Upper lobe of right lung (tissue), 1 donor: ENCODE measurements at regions of chr2 and their contacts with region 1.

Region 1: DNA sequence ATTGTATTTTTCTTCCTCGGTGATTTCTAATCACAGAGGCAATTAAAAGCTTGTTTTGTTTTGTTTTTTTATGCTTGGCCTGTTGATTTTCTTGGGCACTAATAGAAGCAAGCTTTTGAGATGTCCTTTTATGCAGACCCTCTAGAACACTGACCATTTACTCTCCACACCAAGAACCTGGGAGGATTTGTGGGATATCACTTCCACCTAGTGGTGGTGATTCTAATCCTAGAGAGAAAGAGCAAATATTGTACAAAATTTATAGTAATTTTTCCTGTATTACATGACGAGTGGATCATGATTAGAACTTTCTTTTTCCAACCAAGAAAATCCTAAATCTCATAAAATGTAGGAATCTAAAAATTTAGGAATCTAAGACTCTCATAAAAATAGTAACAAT is 23.4 kb downstream of the NEMP2 start:
- DNase-seq: no peak
- ATAC-seq: no peak
- H3K4me3 ChIP-seq: no peak overlapping the region
- H3K27ac ChIP-seq: no peak overlapping the region
- H3K4me1 ChIP-seq: no peaks in the 10 kb centered on the region
- H3K27me3 ChIP-seq: no peaks in the 10 kb centered on the region
- CTCF ChIP-seq: peak; percentile 48

Region 2: DNA sequence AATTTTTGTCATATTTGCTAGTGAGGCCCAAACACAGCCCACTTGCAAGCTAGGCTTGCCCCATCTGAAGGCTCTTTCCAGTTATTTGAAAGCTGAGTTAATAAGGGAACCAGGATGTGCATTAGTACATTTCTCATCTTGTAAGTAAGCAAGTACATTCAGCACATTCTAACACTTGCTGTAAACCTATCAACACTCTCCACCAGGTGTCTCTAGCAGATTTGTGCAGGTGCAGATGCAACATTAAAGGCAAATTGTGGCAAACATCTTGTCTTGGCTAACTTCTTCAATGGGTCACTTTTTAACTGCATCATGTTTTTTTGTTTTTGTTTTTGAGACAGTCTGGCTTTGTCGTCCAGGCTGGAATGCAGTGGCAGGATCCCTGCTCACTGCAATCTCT is 128.3 kb before region 1 on chr2:
- intact Hi-C with region 1: loop called (anchors 10 kb)
- DNase-seq: no peak
- ATAC-seq: peak; percentile 67
- H3K4me3 ChIP-seq: no peak overlapping the region
- H3K27ac ChIP-seq: no peak overlapping the region
- H3K4me1 ChIP-seq: no peaks in the 10 kb centered on the region
- H3K27me3 ChIP-seq: no peaks in the 10 kb centered on the region
- CTCF ChIP-seq: peak; percentile 55